Activated CD8-positive, alpha-beta T cell treated with anti-CD3 and anti-CD28 coated beads for 36 hours (primary cell): ENCODE measurements at regions of chr15 and their contacts with region 1.

Region 1: DNA sequence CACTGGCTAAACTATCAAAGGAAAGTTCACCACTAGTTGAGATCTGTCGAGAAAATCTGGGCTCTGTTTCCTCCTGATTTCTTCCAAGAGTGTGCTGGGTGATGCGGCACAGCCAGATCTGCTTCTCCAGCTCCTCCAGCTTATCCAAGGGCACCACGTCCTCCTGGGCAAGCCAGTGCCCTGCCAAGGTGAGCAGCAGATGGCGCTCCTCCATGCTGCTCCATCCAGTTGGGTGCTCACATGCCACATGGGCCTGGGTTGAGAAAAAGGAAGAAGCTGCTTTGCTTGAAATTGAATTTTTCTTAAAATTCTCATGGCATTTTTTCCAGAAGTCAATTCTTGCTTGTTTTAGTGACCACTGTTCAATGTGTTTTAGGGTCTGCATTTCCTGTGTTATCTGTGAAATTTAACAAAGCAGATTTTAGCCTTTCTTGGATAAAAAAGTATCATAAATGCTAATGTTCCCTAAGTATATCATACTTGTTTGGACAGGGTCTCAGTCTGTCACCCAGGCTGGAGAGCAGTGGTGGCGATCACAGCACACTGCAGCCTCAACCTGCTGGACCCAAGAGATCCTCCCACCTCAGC is 47.3 kb downstream of the EIF3J start:
- DNase-seq: peak; percentile 70
- ATAC-seq: peak; percentile 88
- H3K4me3 Mint-ChIP-seq: no peak overlapping the region
- H3K27ac Mint-ChIP-seq: no peak overlapping the region
- H3K4me1 Mint-ChIP-seq: peaks cover 7% of the 10 kb centered on the region
- H3K27me3 Mint-ChIP-seq: no peaks in the 10 kb centered on the region
- CTCF ChIP-seq: peak; percentile 43

Region 2: DNA sequence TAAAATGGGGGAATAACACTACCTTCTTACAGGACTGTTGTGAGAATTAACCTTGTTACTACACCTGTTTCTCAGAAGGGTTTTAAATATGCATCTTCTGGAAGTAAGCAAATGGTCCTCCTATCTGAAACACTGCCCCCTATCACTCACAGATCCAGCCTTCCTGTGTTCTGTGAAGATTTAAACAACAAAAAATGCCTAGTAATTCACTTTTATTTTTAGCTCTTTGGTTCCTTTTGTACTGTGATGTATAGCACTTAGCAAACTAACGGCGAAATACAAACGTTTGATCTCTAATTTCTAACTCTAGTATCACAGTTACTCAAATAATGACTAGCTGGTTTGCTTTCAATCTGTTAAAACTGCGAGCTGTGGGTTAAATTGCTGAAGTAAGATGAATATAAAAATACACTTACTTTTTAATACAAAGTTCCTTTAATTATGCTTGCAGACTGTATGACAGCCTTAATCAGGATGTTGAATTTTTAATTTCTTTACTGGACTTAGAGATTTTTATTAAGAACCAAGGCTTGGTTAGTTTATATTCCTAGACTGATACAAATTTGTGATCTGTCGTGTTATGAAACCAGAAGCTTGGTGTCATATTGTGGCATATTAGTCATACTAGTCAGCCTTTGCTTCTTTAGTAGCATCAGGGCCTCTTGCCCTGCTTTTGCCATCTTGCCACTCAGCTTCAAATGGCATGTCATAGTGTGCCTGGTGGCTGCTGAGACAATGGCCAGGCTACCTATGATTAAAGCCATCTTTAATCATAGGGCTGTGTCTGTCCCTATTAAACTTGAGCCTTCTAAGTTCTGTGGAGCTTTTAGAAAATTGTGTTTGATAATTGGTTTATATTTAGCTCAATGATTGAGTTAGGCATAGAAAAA is 38.1 kb before region 1 on chr15:
- CTCF ChIA-PET with region 1: interaction called, 13 read pairs
- POLR2A ChIA-PET with region 1: interaction called, 4 read pairs
- intact Hi-C with region 1: no loop called
- DNase-seq: peak; percentile 78
- ATAC-seq: peak; percentile 94
- H3K4me3 Mint-ChIP-seq: peak overlapping the region; percentile 48
- H3K27ac Mint-ChIP-seq: peak overlapping the region; percentile 87
- H3K4me1 Mint-ChIP-seq: peaks cover 56% of the 10 kb centered on the region
- H3K27me3 Mint-ChIP-seq: no peaks in the 10 kb centered on the region
- CTCF ChIP-seq: peak; percentile 38

Region 3: DNA sequence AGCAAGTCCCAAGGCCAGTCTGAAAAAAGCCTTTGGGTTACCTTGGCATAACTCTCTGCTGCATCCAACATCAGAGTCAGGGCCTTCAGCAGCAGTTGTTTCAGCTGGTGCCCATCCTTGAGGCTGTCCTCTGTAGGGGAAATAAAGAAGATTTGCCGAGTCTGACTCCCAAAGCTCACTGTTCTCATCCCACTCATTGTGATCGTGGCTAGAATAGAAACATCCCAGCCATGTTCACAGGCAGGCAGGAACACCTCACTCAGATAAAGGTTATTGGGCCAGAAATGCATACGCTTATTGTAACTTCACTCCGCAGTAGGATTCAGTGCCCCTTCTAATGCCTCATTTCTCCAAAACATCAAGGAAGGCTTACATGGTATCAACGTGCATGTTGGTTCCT is 18.1 kb before region 1 on chr15:
- CTCF ChIA-PET with region 1: interaction called, 11 read pairs
- POLR2A ChIA-PET with region 1: interaction called, 3 read pairs
- intact Hi-C with region 1: no loop called
- DNase-seq: no peak
- ATAC-seq: no peak
- H3K4me3 Mint-ChIP-seq: no peak overlapping the region
- H3K27ac Mint-ChIP-seq: no peak overlapping the region
- H3K4me1 Mint-ChIP-seq: no peaks in the 10 kb centered on the region
- H3K27me3 Mint-ChIP-seq: no peaks in the 10 kb centered on the region
- CTCF ChIP-seq: no peak

Region 4: DNA sequence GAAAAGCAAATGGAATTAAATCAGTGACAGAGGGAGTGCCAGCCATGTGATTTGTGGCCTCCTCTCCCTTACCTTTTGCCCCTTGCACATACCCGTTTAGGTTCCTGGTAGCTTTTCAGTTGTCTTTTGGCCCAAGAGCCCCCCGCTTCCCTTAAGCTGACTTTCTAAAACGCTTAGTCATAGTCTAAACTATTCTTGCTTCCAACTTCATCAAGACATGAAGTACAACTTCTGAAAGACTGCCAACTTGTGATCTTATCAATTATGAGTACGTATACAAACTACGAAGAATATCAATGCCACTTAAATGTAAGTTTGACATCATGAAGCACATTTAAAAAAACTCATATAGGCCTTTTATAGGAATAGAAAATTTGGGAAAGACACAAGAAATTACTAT is 14.6 kb after region 1 on chr15:
- CTCF ChIA-PET with region 1: interaction called, 10 read pairs
- POLR2A ChIA-PET with region 1: interaction called, 4 read pairs
- intact Hi-C with region 1: no loop called
- DNase-seq: no peak
- ATAC-seq: no peak
- H3K4me3 Mint-ChIP-seq: no peak overlapping the region
- H3K27ac Mint-ChIP-seq: peak overlapping the region; percentile 30
- H3K4me1 Mint-ChIP-seq: peaks cover 36% of the 10 kb centered on the region
- H3K27me3 Mint-ChIP-seq: no peaks in the 10 kb centered on the region
- CTCF ChIP-seq: no peak

Region 5: DNA sequence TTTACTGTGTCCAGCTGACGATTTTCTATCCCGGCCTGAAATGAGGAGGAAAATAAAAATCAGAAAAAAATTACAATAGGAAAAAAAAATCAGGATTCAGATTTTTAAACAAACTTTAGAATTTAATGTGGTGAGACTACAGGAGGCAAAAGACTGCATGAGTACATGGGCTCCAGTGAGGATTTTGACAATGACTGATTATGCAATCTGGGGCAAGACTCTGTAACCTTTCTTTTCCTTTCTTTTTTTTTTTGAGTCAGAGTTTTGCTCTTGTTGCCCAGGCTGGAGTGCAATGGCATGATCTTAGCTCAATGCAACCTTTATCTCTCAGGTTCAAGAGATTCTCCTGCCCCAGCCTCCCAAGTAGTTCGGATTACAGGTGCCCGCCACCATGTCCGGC is 49.3 kb after region 1 on chr15:
- CTCF ChIA-PET with region 1: interaction called, 10 read pairs
- POLR2A ChIA-PET with region 1: no interaction called
- intact Hi-C with region 1: no loop called
- DNase-seq: peak; percentile 24
- ATAC-seq: peak; percentile 66
- H3K4me3 Mint-ChIP-seq: peak overlapping the region; percentile 39
- H3K27ac Mint-ChIP-seq: peak overlapping the region; percentile 97
- H3K4me1 Mint-ChIP-seq: peaks cover 20% of the 10 kb centered on the region
- H3K27me3 Mint-ChIP-seq: no peaks in the 10 kb centered on the region
- CTCF ChIP-seq: no peak